ENCODE measurements at regions of chr19 and their contacts with region 1.

Region 1: DNA sequence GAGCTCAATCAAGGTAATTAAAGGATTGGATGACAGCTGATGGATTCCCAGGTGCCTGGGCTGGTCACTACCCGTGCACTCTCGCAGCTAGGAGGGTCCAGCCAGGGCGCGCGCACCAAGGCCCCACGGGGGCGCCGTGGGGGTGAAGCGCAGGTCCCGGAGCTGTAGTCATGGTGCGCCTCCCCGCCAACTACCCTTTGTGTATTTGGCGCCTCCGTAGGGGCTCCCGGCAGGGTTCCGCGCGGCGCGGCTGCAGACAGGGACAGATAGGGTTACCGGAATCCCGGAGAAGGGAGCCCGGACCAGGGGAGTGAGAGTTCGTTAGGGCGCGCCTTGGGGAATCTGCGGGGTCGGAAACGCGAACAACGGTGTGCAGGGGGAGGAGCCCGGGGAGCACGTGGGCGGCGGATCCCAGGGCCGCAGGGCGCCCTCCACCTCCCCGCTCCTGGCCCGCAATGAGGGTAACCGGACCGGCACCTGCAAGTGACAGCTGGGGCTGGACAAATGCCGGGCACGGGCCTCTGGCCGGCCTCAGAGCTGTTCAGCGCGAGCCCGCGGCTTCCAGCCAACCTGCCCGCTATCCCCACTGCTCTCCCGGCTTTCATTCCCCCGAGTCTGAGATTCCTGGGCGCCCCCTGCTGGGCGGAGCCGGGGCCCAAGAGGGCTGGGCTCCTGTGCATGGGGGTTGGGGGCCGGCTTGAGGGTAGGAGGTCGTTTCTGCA is 3.4 kb upstream of the PRAM1 start:
- DNase-seq: no peak
- H3K4me3 ChIP-seq: peak overlapping the region; percentile 64
- CTCF ChIP-seq: peak; percentile 87

Region 2: DNA sequence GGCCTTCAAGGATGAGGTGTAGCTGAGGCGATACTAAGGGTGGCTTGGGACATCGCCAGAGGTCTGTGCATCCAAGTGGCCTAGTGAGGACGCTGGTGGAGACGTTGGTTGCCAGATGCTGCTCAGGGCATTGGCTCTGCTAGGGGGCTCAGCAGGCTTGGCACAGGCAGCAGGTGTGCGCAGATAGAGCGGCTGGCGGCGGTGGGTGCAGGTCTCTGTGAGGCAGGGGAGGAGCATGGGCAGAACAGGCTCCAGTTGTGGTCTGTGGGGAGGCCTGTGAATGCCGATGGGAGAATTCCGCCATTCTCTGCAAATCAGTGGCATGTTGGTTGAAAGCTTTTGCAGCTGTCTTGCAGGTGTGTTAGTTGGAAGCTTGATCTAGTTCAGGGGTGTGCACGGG is 24.6 kb before region 1 on chr19:
- CTCF ChIA-PET with region 1: interaction called, 15 read pairs
- POLR2A ChIA-PET with region 1: no interaction called
- DNase-seq: no peak
- H3K4me3 ChIP-seq: no peak overlapping the region
- CTCF ChIP-seq: no peak

Region 3: GRCh38 chr19:8487137-8487851 is 18.5 kb before region 1 on chr19:
- CTCF ChIA-PET with region 1: interaction called, 15 read pairs
- POLR2A ChIA-PET with region 1: no interaction called
- DNase-seq: no peak
- H3K4me3 ChIP-seq: no peak overlapping the region
- CTCF ChIP-seq: no peak

Region 4: GRCh38 chr19:8494158-8494557 is 11.7 kb before region 1 on chr19:
- CTCF ChIA-PET with region 1: interaction called, 25 read pairs
- POLR2A ChIA-PET with region 1: no interaction called
- DNase-seq: no peak
- H3K4me3 ChIP-seq: no peak overlapping the region
- CTCF ChIP-seq: no peak

Measured in AG04449 (cell line).